ENCODE measurements at regions of chr6 and their contacts with region 1.

Region 1: DNA sequence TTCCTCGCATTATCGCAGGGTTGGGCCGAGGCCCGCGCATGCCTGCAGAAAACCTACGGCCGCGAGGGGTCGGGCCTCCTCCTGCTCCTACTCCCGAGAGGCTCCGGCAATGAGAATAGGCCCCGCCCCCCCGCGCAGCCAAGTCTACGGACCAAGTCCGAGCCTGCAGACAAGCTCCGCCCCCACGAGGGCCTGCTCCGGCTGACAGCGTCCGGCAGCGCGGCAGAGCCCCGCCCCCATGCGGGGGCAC is 3.1 kb upstream of the GPSM3 start:
- DNase-seq: peak; percentile 97
- H3K4me3 ChIP-seq: peak overlapping the region; percentile 94
- CTCF ChIP-seq: peak; percentile 43

Region 2: DNA sequence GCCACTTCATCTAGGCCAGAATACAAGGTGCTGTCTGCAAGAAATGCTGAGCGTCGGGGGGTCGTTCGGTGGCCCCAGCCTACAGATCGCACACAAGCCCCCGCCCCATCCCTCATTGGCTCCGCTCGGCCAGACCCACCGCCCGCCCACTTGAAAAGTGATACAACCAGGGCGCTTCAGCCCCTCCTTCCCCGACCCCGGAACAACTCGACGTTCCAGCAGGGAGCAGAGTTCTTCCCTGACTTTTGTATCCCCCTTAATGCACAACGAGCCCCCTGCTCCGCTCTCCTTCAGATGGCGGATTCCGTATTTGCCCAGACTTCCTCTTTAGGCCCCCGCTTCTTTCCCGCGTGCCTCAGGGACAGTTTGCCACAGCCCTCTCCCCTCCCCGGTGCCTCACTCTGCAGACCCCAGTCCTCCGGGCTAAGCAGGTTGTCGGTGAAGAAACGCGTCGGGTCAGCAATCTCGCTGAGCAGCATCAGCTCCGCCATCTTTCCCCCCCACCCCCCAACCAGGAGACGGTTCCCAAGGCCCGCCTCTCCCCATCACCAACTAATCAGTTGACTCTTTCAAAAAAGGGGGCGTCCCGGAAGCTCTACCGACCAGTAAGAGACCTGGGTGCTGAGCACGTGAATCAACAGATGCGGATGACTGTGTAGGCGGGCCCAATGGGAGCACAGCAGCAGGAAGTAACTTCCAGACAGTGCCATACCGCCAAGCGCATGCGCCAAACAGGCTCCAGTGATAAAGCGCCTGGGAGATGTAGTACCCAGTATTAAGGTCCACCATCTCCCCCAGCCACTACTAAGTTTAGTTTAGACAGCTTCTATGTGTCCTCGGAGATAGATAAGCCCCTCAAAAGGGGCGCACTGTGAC is 67.6 kb before region 1 on chr6 and contains the start of gene ATF6B:
- CTCF ChIA-PET with region 1: interaction called, 18 read pairs
- POLR2A ChIA-PET with region 1: interaction called, 5 read pairs
- DNase-seq: peak; percentile 99
- H3K4me3 ChIP-seq: peak within 1 kb of the TSS; percentile 97
- CTCF ChIP-seq: no peak

Region 3: GRCh38 chr6:32181915-32182529 is 13.6 kb before region 1 on chr6:
- CTCF ChIA-PET with region 1: interaction called, 10 read pairs
- POLR2A ChIA-PET with region 1: interaction called, 8 read pairs
- DNase-seq: no peak
- H3K4me3 ChIP-seq: no peak overlapping the region
- CTCF ChIP-seq: no peak